ENCODE measurements at regions of chr1 and their contacts with region 1.

Region 1: GRCh38 chr1:230176871-230177411 is 109.9 kb downstream of the GALNT2 start:
- DNase-seq: peak; percentile 66 to 86 (median 76)
- ATAC-seq: peak; percentile 95
- H3K4me3 ChIP-seq: peak overlapping the region; percentile 24
- H3K27ac ChIP-seq: peak overlapping the region; percentile 66
- H3K4me1 ChIP-seq: peaks cover 17 to 38% of the 10 kb centered on the region in 2 experiments
- H3K27me3 ChIP-seq: no peaks in the 10 kb centered on the region
- CTCF ChIP-seq: no peak
- EP300 ChIP-seq: no peak
- POLR2A ChIP-seq: no peak
- RAD21 ChIP-seq: peak in 1 of 2 experiments; percentile 36; a peak in 2 of 4 replicates

Region 2: GRCh38 chr1:229848752-229849677 is 327.9 kb before region 1 on chr1:
- CTCF ChIA-PET with region 1: no interaction called
- POLR2A ChIA-PET with region 1: no interaction called
- in situ Hi-C with region 1: no loop called
- intact Hi-C with region 1: loop called (anchors 10 kb)
- DNase-seq: peak; percentile 58 to 67 (median 64)
- ATAC-seq: peak; percentile 90
- H3K4me3 ChIP-seq: no peak overlapping the region
- H3K27ac ChIP-seq: no peak overlapping the region
- H3K4me1 ChIP-seq: no peaks in the 10 kb centered on the region
- H3K27me3 ChIP-seq: peaks cover 5 to 53% of the 10 kb centered on the region in 2 experiments; a peak in 3 of 5 replicates
- CTCF ChIP-seq: peak; percentile 62 to 80 (median 78)
- EP300 ChIP-seq: no peak
- POLR2A ChIP-seq: no peak
- RAD21 ChIP-seq: peak; percentile 20 to 55; a peak in 3 of 4 replicates

Region 3: GRCh38 chr1:230047114-230047865 is 129.7 kb before region 1 on chr1:
- CTCF ChIA-PET with region 1: no interaction called
- POLR2A ChIA-PET with region 1: no interaction called
- in situ Hi-C with region 1: no loop called
- intact Hi-C with region 1: no loop called
- DNase-seq: peak in 1 of 4 experiments; percentile 67
- ATAC-seq: peak; percentile 85
- H3K4me3 ChIP-seq: no peak overlapping the region
- H3K27ac ChIP-seq: no peak overlapping the region
- H3K4me1 ChIP-seq: peaks cover 0 to 7% of the 10 kb centered on the region in 2 experiments; a peak in 2 of 5 replicates
- H3K27me3 ChIP-seq: peaks cover 32 to 50% of the 10 kb centered on the region in 2 experiments; a peak in 4 of 5 replicates
- CTCF ChIP-seq: no peak
- EP300 ChIP-seq: no peak
- POLR2A ChIP-seq: no peak
- RAD21 ChIP-seq: no peak

Region 4: DNA sequence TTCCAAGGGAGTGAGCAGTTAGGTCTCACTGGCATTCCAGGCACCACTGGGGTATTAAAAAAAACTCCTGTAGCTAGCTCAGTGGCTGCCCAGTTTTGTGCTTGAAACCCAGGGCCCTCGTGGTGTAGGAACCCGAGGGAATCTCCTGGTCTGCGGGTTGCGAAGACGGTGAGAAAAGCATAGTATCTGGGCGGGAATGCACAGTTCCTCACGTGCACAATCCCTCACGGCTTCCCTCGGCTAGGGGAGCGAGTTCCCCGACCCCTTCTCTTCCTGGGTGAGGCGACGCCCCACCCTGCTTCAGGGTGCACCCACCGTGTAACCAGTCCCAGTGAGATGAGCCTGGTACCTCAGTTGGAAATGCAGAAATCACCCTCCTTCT is 299.7 kb after region 1 on chr1:
- CTCF ChIA-PET with region 1: no interaction called
- POLR2A ChIA-PET with region 1: no interaction called
- in situ Hi-C with region 1: no loop called
- intact Hi-C with region 1: no loop called
- DNase-seq: no peak
- ATAC-seq: no peak
- H3K4me3 ChIP-seq: no peak overlapping the region
- H3K27ac ChIP-seq: no peak overlapping the region
- H3K4me1 ChIP-seq: no peaks in the 10 kb centered on the region
- H3K27me3 ChIP-seq: peaks cover 2 to 11% of the 10 kb centered on the region in 2 experiments; a peak in 3 of 5 replicates
- CTCF ChIP-seq: no peak
- EP300 ChIP-seq: no peak
- POLR2A ChIP-seq: no peak
- RAD21 ChIP-seq: no peak

Measured in K562 (cell line).